ENCODE measurements at regions of chr22 and their contacts with region 1.

Region 1: GRCh38 chr22:26665813-26666231 is 8.4 kb downstream of the MIAT start:
- DNase-seq: no peak
- CTCF ChIP-seq: no peak

Region 2: GRCh38 chr22:26650722-26651421 is 14.9 kb before region 1 on chr22:
- CTCF ChIA-PET with region 1: interaction called, 13 read pairs
- POLR2A ChIA-PET with region 1: no interaction called
- DNase-seq: no peak
- CTCF ChIP-seq: no peak

Region 3: DNA sequence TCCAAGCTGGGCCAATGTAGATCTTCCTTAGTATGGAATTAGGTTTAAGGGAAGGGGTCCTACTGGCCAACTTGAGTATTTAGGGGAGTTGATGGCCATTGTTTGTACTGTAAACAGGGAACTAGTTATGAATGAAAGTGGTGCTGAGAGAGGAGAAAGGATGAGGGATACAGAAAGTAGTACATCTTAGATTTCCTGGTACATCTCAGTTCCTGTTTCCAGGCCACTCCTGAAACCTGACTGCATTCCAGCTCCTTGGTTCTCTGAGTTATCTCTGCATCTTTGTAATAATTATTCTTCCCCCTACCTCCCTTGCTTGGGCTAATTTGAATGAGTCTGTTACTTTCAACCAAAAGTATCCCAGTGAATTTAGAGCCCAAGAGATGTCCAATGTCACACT is 21.6 kb after region 1 on chr22:
- CTCF ChIA-PET with region 1: no interaction called
- POLR2A ChIA-PET with region 1: no interaction called
- DNase-seq: no peak
- CTCF ChIP-seq: no peak

Region 4: DNA sequence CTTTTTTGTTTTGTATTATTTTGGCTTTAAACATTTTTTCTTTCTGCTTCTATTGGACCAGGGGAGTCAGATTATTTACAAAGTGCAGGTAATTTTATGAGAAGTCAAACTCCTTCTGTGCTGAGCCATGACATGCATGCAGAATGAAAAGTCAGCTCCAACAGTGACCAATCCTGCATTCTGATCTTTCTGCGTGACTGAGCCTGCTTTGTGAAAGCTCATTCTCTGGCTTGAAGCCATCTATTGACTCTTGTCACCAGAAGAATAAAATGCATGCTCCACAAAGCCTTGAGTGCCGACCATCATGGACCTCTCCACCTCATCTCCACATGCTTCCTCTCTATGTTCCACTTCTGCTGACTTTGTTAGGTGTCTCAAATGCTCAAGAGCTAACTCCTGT is 41.8 kb after region 1 on chr22:
- CTCF ChIA-PET with region 1: no interaction called
- POLR2A ChIA-PET with region 1: no interaction called
- DNase-seq: no peak
- CTCF ChIP-seq: no peak

Region 5: GRCh38 chr22:26718905-26719304 is 53.1 kb after region 1 on chr22:
- CTCF ChIA-PET with region 1: no interaction called
- POLR2A ChIA-PET with region 1: no interaction called
- DNase-seq: no peak
- CTCF ChIP-seq: no peak